ENCODE measurements at regions of chr2 and their contacts with region 1.

Region 1: DNA sequence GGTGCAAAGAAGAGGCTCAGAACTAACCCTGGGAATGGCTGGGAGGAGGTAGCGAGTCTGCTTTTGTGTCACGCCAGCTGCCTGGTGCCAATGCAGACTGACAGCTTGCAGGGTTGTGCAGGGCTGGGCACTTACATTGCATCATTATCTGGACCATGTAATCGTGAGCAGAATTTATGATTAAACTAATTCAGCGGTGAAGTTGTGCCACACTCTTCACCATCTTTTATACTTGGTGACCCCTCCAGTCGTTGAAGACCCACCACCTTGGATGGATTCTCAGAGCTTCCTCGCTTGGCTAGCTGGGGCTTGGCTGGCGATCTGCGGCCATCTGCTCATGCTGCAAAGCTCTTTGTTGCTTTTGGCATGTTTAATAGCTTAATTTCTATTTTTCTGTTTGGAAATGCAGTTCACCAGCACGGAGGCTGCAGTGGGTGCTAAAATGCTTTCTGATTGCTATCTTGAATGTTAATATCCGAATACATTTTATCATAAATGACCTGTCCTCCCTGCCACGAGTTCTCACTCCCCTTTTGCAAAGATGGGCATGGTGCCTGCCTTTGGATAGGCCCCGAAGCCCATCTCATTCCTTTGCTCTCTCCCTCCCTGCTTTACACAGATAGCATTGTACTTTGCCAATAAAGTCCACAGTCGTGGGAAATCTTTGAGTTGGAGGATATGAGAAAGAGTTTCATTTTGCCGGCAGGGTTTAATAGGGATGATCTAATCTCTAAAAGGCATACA is 188.2 kb downstream of the PRKCE start:
- DNase-seq: no peak

Region 2: DNA sequence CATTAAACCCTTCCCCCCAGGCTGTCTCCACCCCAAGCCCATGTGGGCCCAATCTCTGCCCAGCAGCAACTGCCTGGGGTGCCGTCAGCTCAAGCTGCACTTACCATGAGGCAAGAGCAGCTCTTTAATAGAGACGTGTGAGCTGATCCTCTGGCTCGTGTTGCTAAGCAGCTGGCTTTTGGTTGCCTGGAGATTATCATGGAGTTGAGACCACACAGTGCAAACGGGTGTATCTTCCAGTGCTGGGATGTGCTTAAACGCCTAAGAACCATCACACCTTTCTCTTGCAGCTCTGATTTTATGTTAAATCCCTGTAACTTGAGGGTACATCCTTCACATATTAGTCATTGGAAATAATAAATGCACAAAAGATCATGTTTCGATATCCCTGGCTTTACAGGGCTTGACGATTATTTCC is 82.9 kb after region 1 on chr2:
- intact Hi-C with region 1: no loop called
- DNase-seq: no peak

Region 3: GRCh38 chr2:46863295-46864281 is 1023.9 kb after region 1 on chr2:
- intact Hi-C with region 1: loop called in 1 of 2 experiments (anchors 5 kb)
- DNase-seq: no peak